Esophagus muscularis mucosa (tissue), 4 donors: ENCODE measurements at regions of chr3 and their contacts with region 1.

Region 1: DNA sequence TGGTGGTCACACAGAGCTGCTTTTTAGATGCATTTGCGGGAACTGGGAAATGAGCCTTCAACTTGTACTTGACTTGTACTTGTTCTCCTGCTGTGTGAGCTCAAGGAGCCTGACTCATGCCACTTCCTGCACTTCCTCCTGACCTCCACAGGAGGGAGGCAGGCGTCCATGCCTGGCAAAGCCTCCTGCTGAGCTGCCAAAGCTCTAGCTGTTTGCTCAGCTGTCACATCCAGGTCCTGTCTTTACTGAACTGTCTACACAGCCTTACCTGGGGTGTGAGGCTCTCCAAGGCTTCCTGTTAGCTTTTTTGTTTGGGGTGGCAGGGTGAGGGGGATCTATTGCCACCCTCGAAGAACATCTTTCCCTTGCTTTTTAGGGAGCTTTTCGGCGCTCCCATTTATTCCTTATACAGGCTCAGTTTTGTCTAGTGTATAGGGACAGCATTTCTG is 6.4 kb downstream of the THPO start:
- DNase-seq: no peak
- H3K4me3 ChIP-seq: no peak overlapping the region
- H3K27ac ChIP-seq: no peak overlapping the region
- H3K4me1 ChIP-seq: peaks cover 11 to 40% (median 26%) of the 10 kb centered on the region in 4 donors
- H3K27me3 ChIP-seq: peaks cover 0 to 6% (median 0%) of the 10 kb centered on the region in 4 donors
- CTCF ChIP-seq: peak; percentile 90 to 95 (median 93)
- EP300 ChIP-seq: no peak
- POLR2A ChIP-seq: no peak

Region 2: DNA sequence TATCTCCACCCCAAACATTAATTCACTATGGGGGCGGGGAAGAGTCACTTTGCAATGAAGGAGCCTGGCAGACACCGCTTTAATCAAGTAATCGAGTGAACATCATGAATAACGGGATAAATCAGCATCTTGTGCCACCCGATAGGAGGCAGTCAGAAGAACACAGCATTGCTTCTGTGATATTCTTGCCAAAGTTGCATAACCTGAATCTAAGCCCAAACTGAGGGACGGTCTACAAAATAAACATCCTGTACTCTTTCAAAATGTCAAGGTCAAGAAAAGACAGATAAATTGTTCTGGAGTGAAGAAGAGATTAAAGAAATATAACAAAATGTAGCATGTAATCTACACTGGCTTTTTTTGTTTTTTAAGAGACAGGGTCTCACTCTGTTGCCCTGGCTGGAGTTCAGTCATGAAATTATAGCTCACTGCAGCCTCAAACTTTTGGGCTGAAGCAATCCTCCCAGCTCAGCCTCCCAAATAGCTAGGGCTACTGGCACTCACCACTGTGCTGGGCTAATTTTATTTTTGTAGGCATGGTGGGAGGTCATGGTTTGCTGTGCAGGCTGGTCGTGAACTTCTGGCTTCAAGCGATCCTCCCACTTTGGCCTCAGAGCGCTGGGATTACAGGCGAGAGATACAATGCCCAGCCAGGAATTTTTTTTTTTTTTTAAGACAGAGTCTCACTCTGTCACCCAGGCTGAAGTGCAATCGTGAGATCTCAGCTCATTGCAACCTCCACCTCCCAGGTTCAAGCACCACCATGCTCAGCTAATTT is 162.3 kb before region 1 on chr3:
- intact Hi-C with region 1: no loop called
- DNase-seq: no peak
- H3K4me3 ChIP-seq: no peak overlapping the region
- H3K27ac ChIP-seq: peak overlapping the region in 1 of 4 donors; percentile 42
- H3K4me1 ChIP-seq: peaks cover 0 to 12% (median 10%) of the 10 kb centered on the region in 4 donors
- H3K27me3 ChIP-seq: peaks cover 0 to 24% (median 2%) of the 10 kb centered on the region in 4 donors
- CTCF ChIP-seq: no peak
- EP300 ChIP-seq: no peak
- POLR2A ChIP-seq: no peak

Region 3: DNA sequence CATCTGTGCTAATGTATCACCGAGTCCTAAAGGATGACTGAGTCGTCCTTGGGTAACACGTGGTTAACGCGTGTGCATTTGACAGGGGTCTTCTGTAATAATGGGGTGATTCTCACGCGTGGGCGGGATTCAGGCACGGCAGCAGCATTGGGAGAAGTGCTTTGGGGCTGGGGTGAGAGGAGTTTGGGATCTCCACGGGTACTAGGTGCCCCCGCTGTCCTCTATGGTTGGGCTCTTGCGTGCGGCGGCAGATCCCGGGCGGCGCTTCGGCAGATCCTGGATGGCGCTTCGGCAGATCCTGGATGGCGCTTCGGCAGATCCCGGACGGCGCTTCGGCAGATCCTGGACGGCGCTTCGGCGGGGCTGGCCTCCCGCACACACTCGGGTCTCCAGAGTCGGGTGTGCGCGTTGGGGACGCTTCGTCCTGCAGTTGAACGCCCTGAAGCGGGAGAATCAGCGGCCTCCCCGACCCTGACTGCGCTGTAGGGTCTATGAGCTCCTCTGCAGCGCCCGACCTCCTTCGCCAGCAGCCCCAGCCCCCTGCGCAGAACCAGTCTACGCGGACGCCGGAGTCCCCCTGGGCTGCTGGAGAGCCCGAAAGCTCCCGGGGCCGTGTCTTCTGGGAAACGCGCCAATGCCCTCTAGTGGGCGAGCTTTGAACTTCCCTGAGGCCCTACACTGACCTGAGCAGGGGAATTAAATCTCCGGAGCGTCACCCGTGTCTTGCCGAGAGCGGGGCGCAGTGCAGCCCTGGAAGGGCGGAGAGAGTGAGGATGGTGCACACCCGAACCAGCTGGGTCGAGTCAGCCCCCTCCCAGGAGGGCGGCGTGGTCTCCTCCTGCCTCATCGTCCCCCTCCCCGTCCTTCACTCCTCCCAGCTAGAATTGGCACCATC is 141.9 kb after region 1 on chr3:
- intact Hi-C with region 1: loop called (anchors 2 kb)
- DNase-seq: peak; percentile 97
- H3K4me3 ChIP-seq: peak overlapping the region; percentile 38 to 62 (median 50)
- H3K27ac ChIP-seq: peak overlapping the region in 2 of 4 donors; percentile 22 to 33
- H3K4me1 ChIP-seq: peaks cover 4 to 17% (median 13%) of the 10 kb centered on the region in 4 donors
- H3K27me3 ChIP-seq: peaks cover 0 to 59% (median 14%) of the 10 kb centered on the region in 4 donors
- CTCF ChIP-seq: peak; percentile 80 to 95 (median 85)
- EP300 ChIP-seq: no peak
- POLR2A ChIP-seq: no peak

Region 4: DNA sequence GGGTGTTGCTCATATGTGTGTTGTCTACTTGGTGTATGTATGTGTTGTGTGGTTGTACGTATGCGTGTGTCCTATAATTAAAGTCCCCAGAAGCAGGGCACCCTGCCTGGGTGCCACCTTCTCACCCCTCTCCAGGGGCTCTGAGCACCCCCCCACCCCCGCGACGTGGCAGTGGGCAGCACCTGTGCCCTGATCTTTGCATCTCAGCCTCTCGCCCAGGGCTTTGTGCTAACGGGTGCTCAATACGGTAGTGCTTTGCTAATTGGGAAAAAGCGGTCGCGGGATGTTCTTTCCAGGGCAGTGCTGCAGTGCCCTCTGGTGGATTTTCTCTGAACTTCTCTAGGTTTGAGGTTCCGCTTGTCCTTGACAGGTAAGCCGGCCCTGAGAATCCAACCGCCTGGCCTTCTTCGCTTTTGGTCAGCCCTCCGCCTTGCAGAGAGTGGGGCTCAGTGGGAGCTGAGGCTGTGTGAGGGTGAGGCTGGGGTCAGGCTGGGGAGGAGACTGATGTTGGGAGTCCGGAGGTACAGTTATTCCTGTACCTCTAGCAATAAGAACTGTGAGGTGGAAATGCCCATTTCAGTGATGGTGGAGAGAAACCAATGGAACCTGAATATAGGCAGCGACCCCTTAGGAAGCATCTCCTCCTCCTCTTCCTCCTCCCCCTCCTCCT is 172.4 kb after region 1 on chr3:
- intact Hi-C with region 1: loop called (anchors 10 kb)
- DNase-seq: peak; percentile 96
- H3K4me3 ChIP-seq: peak overlapping the region in 1 of 4 donors; percentile 5
- H3K27ac ChIP-seq: no peak overlapping the region
- H3K4me1 ChIP-seq: peaks cover 4 to 9% (median 7%) of the 10 kb centered on the region in 4 donors
- H3K27me3 ChIP-seq: peaks cover 0 to 49% (median 5%) of the 10 kb centered on the region in 4 donors
- CTCF ChIP-seq: peak; percentile 88 to 98 (median 94)
- EP300 ChIP-seq: no peak
- POLR2A ChIP-seq: no peak